ENCODE measurements at regions of chr2 and their contacts with region 1.

Region 1: DNA sequence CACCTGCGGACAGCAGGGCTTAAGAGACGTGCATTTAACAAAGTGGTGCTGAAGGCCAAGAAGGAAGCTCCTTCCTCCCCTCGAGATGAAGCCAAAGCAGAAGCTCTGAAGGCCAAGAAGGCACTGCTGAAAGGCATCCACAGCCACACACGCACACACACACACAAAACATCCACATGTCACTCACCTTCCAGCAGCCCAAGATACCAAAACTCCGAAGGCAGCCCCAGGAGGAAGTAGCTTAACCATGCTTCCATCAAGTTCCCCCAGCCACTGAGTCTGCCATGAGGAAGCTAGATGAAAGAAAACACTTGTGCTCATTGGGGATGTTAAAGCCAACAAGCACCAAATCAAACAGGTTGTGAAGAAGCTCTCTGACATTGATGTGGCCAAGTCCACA is 175.7 kb upstream of the POU3F3 start:
- DNase-seq: no peak
- ATAC-seq: no peak
- H3K4me3 ChIP-seq: no peak overlapping the region
- H3K27ac ChIP-seq: no peak overlapping the region
- H3K4me1 ChIP-seq: no peaks in the 10 kb centered on the region
- H3K27me3 ChIP-seq: no peaks in the 10 kb centered on the region
- CTCF ChIP-seq: no peak

Region 2: GRCh38 chr2:104834431-104835153 is 156.4 kb after region 1 on chr2:
- CTCF ChIA-PET with region 1: no interaction called
- POLR2A ChIA-PET with region 1: no interaction called
- in situ Hi-C with region 1: no loop called
- intact Hi-C with region 1: no loop called
- DNase-seq: no peak
- ATAC-seq: no peak
- H3K4me3 ChIP-seq: no peak overlapping the region
- H3K27ac ChIP-seq: no peak overlapping the region
- H3K4me1 ChIP-seq: no peaks in the 10 kb centered on the region
- H3K27me3 ChIP-seq: peaks cover 2% of the 10 kb centered on the region; the same call in 1 of the 2 replicates
- CTCF ChIP-seq: no peak

Region 3: DNA sequence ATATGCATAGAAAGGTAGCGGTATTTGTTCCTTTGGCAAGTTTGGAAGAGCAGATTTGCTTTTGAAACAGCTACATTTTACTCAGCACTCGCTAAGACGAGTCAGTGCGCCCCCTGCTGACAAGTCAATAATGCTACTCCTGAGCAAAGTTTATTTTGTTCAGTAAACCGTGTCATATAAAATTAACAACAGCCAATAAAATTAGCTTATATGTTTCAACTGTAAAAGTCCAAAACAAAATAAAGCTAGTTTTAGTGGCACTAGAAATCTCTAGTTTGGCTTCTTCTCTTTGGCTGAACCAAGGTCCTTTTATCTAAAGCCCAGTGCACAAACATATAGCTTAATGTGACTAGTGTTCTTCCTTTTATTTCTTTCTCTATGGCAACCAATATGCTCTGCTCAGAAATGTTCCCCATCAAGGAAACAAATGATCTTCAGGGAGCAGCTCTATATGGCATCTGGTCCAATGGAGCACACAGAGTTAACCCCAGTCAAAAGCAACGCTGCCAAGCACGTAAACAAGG is 171.5 kb after region 1 on chr2:
- CTCF ChIA-PET with region 1: interaction called, 16 read pairs
- POLR2A ChIA-PET with region 1: no interaction called
- in situ Hi-C with region 1: no loop called
- intact Hi-C with region 1: no loop called
- DNase-seq: peak; percentile 17
- ATAC-seq: no peak
- H3K4me3 ChIP-seq: no peak overlapping the region
- H3K27ac ChIP-seq: no peak overlapping the region
- H3K4me1 ChIP-seq: peaks cover 8% of the 10 kb centered on the region; the same call in 1 of the 2 replicates
- H3K27me3 ChIP-seq: peaks cover 55% of the 10 kb centered on the region
- CTCF ChIP-seq: peak; percentile 85

Measured in Panc1 (cell line).